SK-N-SH (cell line): ENCODE measurements at regions of chr17 and their contacts with region 1.

Region 1: DNA sequence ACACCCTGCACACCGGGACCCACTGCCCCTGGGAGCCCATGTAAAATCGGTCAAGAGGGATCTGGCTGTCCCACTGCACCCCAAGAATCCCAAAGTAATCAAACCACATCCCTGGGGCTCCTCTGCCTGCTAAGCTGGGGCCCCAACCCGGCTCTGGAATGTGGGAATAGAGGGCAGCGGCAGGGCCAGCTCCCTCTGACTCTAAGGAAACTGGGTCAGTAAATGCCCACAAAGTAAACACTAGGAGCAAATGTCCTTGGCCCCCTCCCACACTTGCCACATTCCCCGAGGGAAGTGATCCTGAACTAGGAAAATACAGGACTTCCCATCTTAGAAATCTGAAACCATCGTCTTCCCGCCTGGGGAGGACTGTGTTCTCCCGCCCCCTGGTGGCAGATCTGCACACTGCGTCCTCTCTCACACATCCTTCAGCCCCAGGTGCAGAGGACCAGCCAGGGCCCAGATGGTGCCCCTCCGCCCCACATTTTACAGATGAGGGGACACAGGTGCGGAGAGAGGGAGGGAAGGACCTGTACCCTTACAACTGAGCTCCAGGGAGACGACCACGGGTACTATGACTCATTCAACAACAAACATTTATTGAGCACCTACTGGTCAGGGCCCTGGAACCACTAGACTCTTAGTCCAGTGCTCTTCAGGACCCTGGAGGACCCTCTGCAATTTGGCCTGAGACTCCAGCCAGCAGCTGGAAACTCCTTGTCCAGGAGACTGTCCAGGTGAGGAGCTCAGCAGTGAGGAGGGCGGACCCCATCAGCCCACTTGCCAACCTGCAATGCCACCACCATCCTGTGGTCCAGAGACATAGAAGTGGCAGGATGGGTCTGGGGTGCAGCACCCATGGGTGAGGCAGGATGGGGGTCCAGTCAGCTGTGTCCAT is 10.1 kb downstream of the P3H4 start:
- DNase-seq: peak; percentile 89
- H3K4me3 ChIP-seq: peak overlapping the region in 1 of 2 experiments; percentile 43; a peak in 1 of 4 replicates
- H3K27ac ChIP-seq: no peak overlapping the region
- H3K4me1 ChIP-seq: peaks cover 0 to 6% of the 10 kb centered on the region in 2 experiments; a peak in 1 of 4 replicates
- H3K27me3 ChIP-seq: no peaks in the 10 kb centered on the region
- CTCF ChIP-seq: peak; percentile 96
- EP300 ChIP-seq: no peak
- RAD21 ChIP-seq: peak; percentile 90

Region 2: DNA sequence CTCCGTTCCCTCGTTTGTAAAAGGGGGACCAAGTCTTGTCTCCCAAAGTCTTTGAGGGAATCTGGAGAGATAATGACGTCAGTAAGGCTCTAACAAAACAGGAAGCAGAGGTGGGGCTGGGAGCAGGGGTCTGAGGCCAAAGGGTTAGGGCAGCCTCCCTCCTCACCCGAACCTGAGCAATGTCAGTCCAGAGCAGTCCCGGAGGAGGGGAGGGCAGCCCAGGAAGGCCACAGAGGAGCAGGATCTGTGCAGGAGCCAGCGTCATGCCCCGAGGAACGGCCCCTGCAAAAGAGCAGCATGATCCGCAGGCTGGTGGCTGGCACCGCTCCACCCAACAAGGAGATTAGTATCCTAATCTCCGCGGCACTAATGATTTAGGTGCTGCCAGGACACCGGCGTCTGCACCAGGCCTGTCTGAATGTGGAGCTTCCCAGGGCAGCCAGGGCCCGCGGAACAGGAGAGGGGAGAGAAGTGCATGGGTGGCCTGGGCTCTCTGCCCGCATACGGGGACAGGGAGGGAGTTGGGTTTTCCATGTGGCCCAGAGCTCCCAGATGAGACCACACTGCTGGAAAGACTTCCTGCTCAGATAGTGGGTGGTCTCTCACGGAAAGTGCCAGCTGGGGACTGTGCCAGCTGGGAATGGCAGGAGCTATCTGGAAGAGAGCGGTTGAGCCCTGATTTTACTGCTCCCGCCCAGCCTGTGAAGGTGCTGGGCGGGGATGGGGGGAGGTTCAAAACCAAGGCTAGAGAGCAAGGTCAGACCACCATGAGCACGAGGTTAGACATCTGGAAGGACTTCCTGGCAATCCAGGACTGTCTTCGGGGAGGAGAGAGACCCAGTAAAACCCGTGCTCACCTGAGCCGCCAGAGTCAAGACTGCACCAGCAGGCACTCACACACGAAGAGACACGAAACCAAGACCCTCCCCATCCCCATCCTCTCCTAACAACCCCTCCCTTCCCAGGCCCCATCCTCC is 166.2 kb before region 1 on chr17:
- CTCF ChIA-PET with region 1: no interaction called
- POLR2A ChIA-PET with region 1: no interaction called
- DNase-seq: peak; percentile 90
- H3K4me3 ChIP-seq: no peak overlapping the region
- H3K27ac ChIP-seq: peak overlapping the region in 1 of 2 experiments; percentile 84; a peak in 2 of 4 replicates
- H3K4me1 ChIP-seq: peaks cover 0 to 22% of the 10 kb centered on the region in 2 experiments; a peak in 2 of 4 replicates
- H3K27me3 ChIP-seq: no peaks in the 10 kb centered on the region
- CTCF ChIP-seq: no peak
- EP300 ChIP-seq: peak in 1 of 2 experiments; percentile 41; a peak in 1 of 4 replicates
- RAD21 ChIP-seq: no peak

Region 3: DNA sequence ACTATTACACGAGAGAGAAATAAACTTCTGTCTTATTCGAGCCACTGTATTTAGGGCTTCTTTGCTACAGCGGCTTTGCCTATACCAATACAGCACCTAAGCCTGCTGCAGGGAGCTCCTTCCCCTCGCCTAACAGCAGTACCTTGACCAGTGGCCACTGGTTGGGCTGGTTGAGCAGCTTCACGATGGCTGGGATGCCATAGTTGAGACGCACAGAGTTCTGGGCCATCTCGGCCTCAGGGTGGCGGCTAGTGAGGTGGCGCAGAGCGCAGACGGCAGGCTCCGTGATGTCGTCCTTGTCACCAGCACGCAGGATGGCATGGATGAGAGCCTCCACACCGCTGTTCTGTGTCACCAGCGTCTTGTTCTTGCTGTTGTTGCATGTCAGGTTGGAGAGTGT is 38.8 kb before region 1 on chr17:
- CTCF ChIA-PET with region 1: interaction called, 12 read pairs
- POLR2A ChIA-PET with region 1: no interaction called
- DNase-seq: no peak
- H3K4me3 ChIP-seq: no peak overlapping the region
- H3K27ac ChIP-seq: no peak overlapping the region
- H3K4me1 ChIP-seq: no peaks in the 10 kb centered on the region; a peak in 1 of 4 replicates
- H3K27me3 ChIP-seq: no peaks in the 10 kb centered on the region
- CTCF ChIP-seq: no peak
- EP300 ChIP-seq: no peak
- RAD21 ChIP-seq: no peak

Region 4: GRCh38 chr17:41786227-41787020 is 15.2 kb before region 1 on chr17 and contains the start of gene JUP:
- CTCF ChIA-PET with region 1: interaction called, 45 read pairs
- POLR2A ChIA-PET with region 1: interaction called, 5 read pairs
- DNase-seq: peak; percentile 99
- H3K4me3 ChIP-seq: peak within 1 kb of the TSS; percentile 64 to 66
- H3K27ac ChIP-seq: peak within 1 kb of the TSS in 1 of 2 experiments; percentile 17; a peak in 1 of 4 replicates
- H3K4me1 ChIP-seq: peaks cover 10 to 32% of the 10 kb centered on the region in 2 experiments; a peak in 2 of 4 replicates
- H3K27me3 ChIP-seq: no peaks in the 10 kb centered on the region
- CTCF ChIP-seq: peak; percentile 63
- EP300 ChIP-seq: no peak
- RAD21 ChIP-seq: no peak
- polyA plus RNA-seq, gene JUP: 9.3 and 13.0 TPM in 2 replicates

Region 5: DNA sequence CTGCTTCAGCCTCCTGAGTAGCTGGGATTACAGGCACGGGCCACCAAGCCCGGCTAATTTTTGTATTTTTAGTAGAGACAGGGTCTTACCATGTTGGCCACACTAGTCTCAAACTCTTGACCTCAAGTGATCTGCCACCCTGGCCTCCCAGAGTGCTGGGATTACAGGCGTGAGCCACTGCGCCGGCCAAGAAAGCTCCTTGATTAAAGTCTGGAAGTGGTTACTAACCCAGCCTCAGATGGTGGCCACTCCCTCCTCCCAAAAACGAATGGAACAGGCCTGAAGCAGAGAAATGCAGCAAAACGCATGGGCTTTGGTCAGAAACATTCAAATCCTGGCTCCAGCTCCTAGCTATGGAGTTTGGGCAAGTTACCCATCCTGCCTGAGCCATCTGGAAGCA is 22.5 kb after region 1 on chr17:
- CTCF ChIA-PET with region 1: interaction called, 10 read pairs
- POLR2A ChIA-PET with region 1: no interaction called
- DNase-seq: no peak
- H3K4me3 ChIP-seq: no peak overlapping the region
- H3K27ac ChIP-seq: no peak overlapping the region
- H3K4me1 ChIP-seq: no peaks in the 10 kb centered on the region
- H3K27me3 ChIP-seq: no peaks in the 10 kb centered on the region
- CTCF ChIP-seq: no peak
- EP300 ChIP-seq: no peak
- RAD21 ChIP-seq: no peak